ENCODE measurements at regions of chr17 and their contacts with region 1.

Region 1: DNA sequence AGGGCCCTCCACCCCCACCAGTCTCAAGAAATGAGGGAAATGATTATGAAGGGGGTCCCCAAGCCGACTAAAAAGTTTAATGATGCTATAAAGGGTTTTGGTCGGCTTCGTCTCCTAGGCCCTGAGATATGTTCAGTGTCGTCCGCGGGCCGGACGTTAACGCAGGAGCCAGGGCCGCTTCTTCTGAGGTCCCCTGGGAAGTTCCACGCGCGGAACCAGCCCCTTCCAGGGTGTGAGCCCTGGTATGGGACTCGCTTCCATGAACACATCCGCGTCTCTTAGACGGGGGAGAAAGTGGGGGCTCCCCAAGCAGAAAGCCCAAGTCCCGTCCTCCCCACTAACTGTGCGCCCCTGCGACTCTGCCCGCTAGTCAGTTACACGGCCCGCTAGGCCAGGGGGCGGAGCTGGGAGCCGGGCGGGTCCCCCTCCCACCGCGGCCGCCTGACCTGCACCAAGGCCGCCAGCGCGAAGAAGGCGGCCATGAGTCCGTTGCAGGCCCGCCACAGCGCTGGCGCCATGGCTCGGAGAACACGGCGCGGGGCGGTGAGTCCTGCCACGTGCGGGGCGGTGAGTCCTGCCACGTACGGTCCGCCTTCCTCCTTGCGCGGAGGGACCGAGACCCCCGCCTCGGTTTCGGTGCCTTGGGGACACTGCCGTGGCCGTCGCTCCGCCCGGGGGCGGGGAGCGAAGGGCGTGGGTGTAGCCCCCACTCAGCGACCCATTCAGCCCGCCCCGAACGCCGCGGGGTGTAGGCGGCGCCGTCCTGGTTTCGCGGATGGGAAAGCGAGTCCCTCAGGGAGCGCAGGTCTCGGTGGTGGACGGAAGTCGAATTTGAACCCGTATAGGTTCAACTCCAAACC is at the start of gene TMEM220:
- DNase-seq: peak; percentile 73 to 86
- ATAC-seq: peak; percentile 96 to 98 (median 97)
- H3K4me3 ChIP-seq: peak within 1 kb of the TSS; percentile 65 to 88 (median 77)
- H3K27ac ChIP-seq: peak within 1 kb of the TSS; percentile 87 to 98 (median 93)
- H3K4me1 ChIP-seq: peaks cover 0 to 13% (median 5%) of the 10 kb centered on the region in 9 donors
- H3K27me3 ChIP-seq: no peaks in the 10 kb centered on the region
- CTCF ChIP-seq: no peak
- total RNA-seq, gene TMEM220: 3.8 to 13.6 (median 7.6) TPM

Region 2: GRCh38 chr17:10697092-10698081 is 32.2 kb before region 1 on chr17 and contains the starts of genes ADPRM and SCO1:
- intact Hi-C with region 1: loop called in 1 of 10 experiments (anchors 2 kb)
- DNase-seq: peak; percentile 92 to 94
- ATAC-seq: peak; percentile 99 to 100 (median 99)
- H3K4me3 ChIP-seq: peak within 1 kb of the TSS; percentile 84 to 99 (median 91)
- H3K27ac ChIP-seq: peak within 1 kb of the TSS; percentile 77 to 98 (median 94)
- H3K4me1 ChIP-seq: peaks cover 6 to 40% (median 25%) of the 10 kb centered on the region in 9 donors
- H3K27me3 ChIP-seq: no peaks in the 10 kb centered on the region
- CTCF ChIP-seq: peak in 8 of 9 donors; percentile 12 to 69 (median 49)
- total RNA-seq, gene ADPRM: 3.6 to 7.3 (median 4.9) TPM
- total RNA-seq, gene SCO1: 28.5 to 43.4 (median 37.4) TPM

Measured in heart right ventricle (tissue), 16 donors.